Tibial artery (tissue), 4 donors: ENCODE measurements at regions of chr2 and their contacts with region 1.

Region 1: GRCh38 chr2:98608116-98608999 is at the starts of genes COA5 and UNC50:
- DNase-seq: peak; percentile 77 to 94
- H3K4me3 ChIP-seq: peak within 1 kb of the TSS; percentile 77 to 92
- H3K27ac ChIP-seq: peak within 1 kb of the TSS; percentile 90 to 98
- H3K4me1 ChIP-seq: peaks cover 0 to 56% (median 43%) of the 10 kb centered on the region in 4 donors
- H3K27me3 ChIP-seq: no peaks in the 10 kb centered on the region
- CTCF ChIP-seq: no peak

Region 2: GRCh38 chr2:98560256-98560771 is 48.0 kb before region 1 on chr2:
- intact Hi-C with region 1: loop called (anchors 5 kb)
- DNase-seq: peak; percentile 35 to 85
- H3K4me3 ChIP-seq: peak overlapping the region; percentile 14 to 17
- H3K27ac ChIP-seq: peak overlapping the region; percentile 83 to 86
- H3K4me1 ChIP-seq: peaks cover 0 to 47% (median 20%) of the 10 kb centered on the region in 4 donors
- H3K27me3 ChIP-seq: no peaks in the 10 kb centered on the region
- CTCF ChIP-seq: no peak